ENCODE measurements at regions of chr1 and their contacts with region 1.

Region 1: GRCh38 chr1:201254625-201255506 is 28.4 kb upstream of the PKP1 start:
- DNase-seq: peak; percentile 76
- H3K4me3 ChIP-seq: peak overlapping the region in 1 of 2 donors; percentile 1
- H3K27ac ChIP-seq: no peak overlapping the region
- H3K4me1 ChIP-seq: peaks cover 2% of the 10 kb centered on the region
- H3K27me3 ChIP-seq: no peaks in the 10 kb centered on the region
- CTCF ChIP-seq: peak; percentile 87 to 97 (median 91)
- POLR2A ChIP-seq: no peak

Region 2: DNA sequence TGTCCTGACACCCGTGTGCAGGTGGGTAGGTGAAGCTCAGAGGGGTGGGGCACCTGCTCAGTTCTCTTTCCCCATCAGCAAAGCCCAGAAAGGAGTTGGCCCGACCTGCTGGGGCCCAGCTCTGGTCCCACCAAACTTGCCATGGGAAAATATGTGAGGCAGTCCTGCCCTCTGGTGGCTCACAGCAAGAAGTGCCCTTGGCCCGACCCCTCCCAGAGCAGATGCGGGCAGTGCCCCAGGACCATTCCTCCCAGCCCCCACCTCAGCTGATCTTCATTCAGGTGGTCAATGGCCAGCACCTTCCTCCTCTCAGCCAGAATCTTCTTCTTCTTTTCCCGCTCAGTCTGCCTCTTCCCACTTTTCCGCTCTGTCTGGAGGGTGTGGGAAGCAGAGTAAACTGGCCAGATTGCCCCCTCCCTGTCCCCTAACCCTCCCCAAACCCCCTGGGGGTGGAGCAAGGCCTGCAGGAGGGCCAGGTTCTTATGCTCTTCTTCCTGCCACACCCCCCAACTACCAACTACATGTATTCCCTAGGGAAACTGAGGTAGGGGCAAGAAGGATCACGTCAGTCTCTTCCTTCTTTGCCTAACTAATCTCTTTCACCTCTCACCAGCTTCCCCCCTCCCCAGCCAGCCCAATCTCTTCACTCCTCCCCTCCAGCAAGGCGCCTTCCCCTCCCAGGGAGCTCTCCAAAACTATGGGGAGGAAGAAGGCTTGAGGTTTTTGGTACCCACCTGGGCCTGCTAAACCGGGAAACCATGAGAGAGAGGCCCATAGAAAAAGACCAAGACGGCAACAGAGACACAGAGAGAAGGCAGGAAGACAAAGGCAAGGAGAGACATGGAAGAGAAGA is 107.0 kb after region 1 on chr1:
- intact Hi-C with region 1: loop called (anchors 10 kb)
- DNase-seq: peak; percentile 51
- H3K4me3 ChIP-seq: no peak overlapping the region
- H3K27ac ChIP-seq: no peak overlapping the region
- H3K4me1 ChIP-seq: no peaks in the 10 kb centered on the region
- H3K27me3 ChIP-seq: no peaks in the 10 kb centered on the region
- CTCF ChIP-seq: peak; percentile 51 to 80 (median 74)
- POLR2A ChIP-seq: no peak

Region 3: GRCh38 chr1:201593200-201593921 is 338.5 kb after region 1 on chr1:
- intact Hi-C with region 1: no loop called
- DNase-seq: peak; percentile 40
- H3K4me3 ChIP-seq: no peak overlapping the region
- H3K27ac ChIP-seq: no peak overlapping the region
- H3K4me1 ChIP-seq: peaks cover 10% of the 10 kb centered on the region
- H3K27me3 ChIP-seq: no peaks in the 10 kb centered on the region
- CTCF ChIP-seq: no peak
- POLR2A ChIP-seq: no peak